ENCODE measurements at regions of chr17 and their contacts with region 1.

Region 1: DNA sequence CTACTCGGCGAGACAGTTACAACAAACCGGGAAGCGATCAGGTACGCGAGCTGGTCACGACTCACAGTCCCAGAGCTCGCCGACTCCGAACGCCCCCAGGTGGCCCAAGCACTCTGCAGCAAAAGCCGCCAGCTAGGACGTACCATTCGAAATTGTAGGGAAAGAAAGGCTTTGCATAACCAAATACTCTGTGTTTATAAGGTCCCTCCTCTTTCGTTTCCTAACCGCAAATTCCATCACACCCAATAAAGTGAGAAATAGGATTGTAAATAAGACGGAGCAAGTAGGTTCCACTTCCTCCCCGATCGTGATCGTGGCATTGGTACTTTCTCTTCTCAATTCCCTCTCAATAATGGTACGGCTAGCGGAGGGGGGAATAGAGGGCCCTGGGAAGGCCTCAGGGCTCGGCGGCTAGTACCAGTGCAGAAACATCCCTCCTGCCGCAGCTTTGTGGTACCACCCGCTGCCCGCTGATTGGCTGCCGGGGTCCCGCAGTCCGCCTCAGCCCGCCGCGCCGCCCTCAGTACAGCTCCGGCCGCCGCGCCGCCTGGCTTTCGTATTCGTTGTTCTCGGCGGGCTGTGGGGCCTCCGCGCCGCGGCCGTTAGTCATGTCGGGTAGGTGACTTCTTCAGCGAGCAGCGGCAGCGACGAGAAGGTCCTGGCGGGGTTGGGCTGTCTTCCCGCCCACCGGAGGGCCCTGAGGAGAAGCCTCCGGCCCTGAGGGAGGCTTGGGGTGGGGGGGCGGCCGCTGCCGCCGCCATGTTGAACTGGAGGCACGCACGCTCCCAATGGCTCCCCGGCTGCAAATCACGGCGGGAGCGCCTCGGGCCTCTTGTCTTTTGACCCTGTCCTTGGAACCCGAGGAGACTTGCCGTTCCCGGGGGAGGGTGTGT is at the start of gene TAF15:
- DNase-seq: peak; percentile 98
- total RNA-seq, gene TAF15: 121 to 129 TPM

Region 2: GRCh38 chr17:35587074-35587971 is 221.9 kb before region 1 on chr17 and contains the start of gene AP2B1:
- intact Hi-C with region 1: loop called in 1 of 2 experiments (anchors 10 kb)
- DNase-seq: peak; percentile 98
- total RNA-seq, gene AP2B1: 101 to 105 TPM

Region 3: GRCh38 chr17:35764123-35764991 is 44.9 kb before region 1 on chr17:
- intact Hi-C with region 1: loop called (anchors 2 to 5 kb)
- DNase-seq: peak; percentile 95

Region 4: DNA sequence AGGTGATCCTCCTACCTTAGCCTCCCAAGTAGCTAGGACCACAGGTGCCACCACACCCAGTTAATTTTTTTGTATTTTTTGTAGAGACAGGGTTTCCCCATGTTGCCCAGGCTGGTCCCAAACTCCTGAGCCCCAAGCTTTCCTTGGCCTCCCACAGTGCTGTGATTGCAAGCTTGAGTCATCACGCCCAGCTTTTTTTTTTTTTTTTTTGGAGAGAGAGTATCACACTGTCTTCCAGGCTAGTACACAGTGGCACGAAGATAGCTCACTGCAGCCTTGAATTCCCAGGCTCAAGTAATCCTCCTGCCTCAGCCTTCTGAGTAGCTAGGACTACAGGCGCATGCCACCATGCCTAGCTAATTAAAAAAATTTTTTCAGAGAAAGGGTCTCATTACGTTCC is 32.3 kb after region 1 on chr17:
- intact Hi-C with region 1: no loop called
- DNase-seq: no peak

Region 5: DNA sequence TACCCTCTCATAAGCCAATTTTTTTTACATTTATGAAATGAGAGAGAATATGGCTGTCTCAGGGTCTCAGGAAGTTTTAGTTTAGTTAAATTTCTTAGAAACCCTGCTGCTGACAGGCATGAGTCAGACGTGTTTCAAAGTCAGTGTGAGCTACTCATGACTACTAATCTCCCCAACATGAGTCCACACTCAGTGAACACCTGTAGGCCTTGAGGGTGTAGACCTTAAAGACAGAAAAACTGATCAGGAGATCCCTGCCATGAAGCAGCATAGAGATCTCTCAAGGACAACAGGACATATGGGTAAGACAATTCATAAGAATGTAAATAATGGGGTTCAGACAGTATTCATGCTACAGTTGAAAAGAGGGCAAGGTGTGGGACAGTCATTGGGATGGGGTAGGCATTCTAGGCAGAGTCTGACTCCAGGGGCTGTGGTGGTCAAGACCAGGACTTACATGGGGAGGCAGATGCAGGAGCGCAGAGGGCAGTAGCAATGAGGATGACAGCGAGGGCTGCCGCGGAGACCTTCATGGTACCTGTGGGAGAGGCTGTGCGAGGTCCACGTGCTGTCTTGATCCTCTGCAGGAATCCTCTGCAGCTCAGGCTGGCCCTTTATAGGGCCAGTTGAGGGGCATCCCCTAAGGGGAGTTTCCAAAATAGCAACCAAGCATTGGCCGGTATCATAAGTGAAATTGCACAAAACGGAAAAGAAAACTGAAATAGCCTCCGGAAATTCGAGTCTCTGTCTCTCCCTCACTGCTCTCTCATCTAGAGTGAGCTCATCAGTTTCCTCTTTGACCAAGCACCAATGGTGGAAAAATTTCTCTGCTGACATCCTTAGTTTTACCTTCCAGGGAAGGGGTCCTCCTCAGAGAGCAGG is 70.8 kb after region 1 on chr17 and contains the start of gene CCL5:
- intact Hi-C with region 1: no loop called
- DNase-seq: no peak
- total RNA-seq, gene CCL5: 2.1 to 3.2 TPM

Measured in posterior vena cava (tissue), 2 donors.